Sigmoid colon (tissue), 7 donors: ENCODE measurements at regions of chr17 and their contacts with region 1.

Region 1: GRCh38 chr17:58006924-58007780 is at the start of gene SRSF1:
- DNase-seq: peak; percentile 99
- H3K4me3 ChIP-seq: peak within 1 kb of the TSS; percentile 78 to 93 (median 83)
- H3K27ac ChIP-seq: peak within 1 kb of the TSS; percentile 97 to 99 (median 98)
- H3K4me1 ChIP-seq: peaks cover 0 to 46% (median 42%) of the 10 kb centered on the region in 4 donors
- H3K27me3 ChIP-seq: no peaks in the 10 kb centered on the region
- CTCF ChIP-seq: no peak
- EP300 ChIP-seq: peak in 1 of 4 donors; percentile 4
- POLR2A ChIP-seq: peak; percentile 93
- total RNA-seq, gene SRSF1: 138 to 214 (median 151) TPM

Region 2: GRCh38 chr17:57747221-57748017 is 259.7 kb before region 1 on chr17:
- intact Hi-C with region 1: no loop called
- DNase-seq: no peak
- H3K4me3 ChIP-seq: no peak overlapping the region
- H3K27ac ChIP-seq: no peak overlapping the region
- H3K4me1 ChIP-seq: no peaks in the 10 kb centered on the region
- H3K27me3 ChIP-seq: no peaks in the 10 kb centered on the region
- CTCF ChIP-seq: peak; percentile 36 to 63 (median 50)
- EP300 ChIP-seq: no peak
- POLR2A ChIP-seq: no peak

Region 3: GRCh38 chr17:57987580-57988421 is 19.4 kb before region 1 on chr17 and contains the start of gene VEZF1:
- intact Hi-C with region 1: loop called (anchors 2 kb)
- DNase-seq: peak; percentile 90
- H3K4me3 ChIP-seq: peak within 1 kb of the TSS; percentile 80 to 91 (median 86)
- H3K27ac ChIP-seq: peak within 1 kb of the TSS; percentile 95 to 99 (median 97)
- H3K4me1 ChIP-seq: peaks cover 0 to 55% (median 46%) of the 10 kb centered on the region in 4 donors
- H3K27me3 ChIP-seq: no peaks in the 10 kb centered on the region
- CTCF ChIP-seq: no peak
- EP300 ChIP-seq: no peak
- POLR2A ChIP-seq: peak; percentile 65 to 73
- total RNA-seq, gene VEZF1: 99.8 to 120 (median 105) TPM

Region 4: DNA sequence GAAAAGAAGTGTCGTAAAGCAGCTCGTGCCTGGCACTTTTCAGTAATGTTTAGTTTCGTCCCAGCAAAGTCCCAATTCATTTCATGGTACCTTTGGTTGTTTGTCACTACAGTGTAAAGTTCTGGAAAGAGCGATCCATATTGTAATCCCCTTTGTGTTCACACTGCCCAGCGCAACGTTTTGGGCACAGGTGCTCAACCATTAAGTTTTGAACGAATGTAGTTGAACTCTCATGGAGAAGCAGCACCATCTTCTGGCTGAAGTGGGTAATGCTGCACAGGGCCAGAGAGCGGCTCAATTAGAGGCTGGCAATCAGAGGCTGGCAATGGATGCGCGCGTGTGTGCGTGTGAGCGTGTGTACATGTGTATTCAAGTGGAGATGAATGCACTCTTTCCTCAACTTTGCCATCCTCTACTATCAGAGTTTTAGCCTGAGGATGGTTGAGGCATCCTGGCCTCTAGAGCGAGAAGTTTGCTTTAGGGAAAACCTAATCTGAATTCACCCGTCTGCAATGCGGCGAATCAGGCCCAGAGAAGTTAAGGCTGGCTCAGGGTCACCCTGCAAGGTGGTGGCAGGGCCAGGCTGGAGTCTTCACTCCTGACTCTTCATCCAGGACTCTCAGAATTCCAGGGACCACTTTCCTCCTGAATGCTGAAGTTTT is 105.9 kb after region 1 on chr17:
- intact Hi-C with region 1: loop called (anchors 2 kb)
- DNase-seq: peak; percentile 85
- H3K4me3 ChIP-seq: no peak overlapping the region
- H3K27ac ChIP-seq: no peak overlapping the region
- H3K4me1 ChIP-seq: no peaks in the 10 kb centered on the region
- H3K27me3 ChIP-seq: no peaks in the 10 kb centered on the region
- CTCF ChIP-seq: peak; percentile 93 to 96 (median 94)
- EP300 ChIP-seq: no peak
- POLR2A ChIP-seq: no peak